Colonic mucosa (tissue), 4 donors: ENCODE measurements at regions of chr5 and their contacts with region 1.

Region 1: DNA sequence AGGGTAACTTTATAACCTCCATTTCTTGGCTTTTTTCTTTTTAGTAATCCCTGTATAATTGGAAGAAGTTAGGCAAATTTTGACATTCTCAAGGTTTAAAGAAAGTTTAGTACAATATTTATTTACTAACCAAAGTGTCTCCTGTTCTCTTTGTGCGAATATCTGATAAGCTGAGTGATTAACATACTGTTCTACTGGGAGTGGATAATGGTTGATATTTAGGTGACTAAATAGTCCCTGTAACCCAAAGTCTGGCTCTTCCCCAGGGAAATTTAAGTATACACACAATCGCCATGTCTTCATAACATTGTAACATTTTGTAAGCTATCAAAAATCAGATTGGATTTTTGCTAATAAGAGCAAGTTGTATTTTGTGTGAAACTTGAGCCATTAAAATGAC is 40.0 kb downstream of the CCNH start:
- DNase-seq: no peak
- H3K4me3 ChIP-seq: no peak overlapping the region
- H3K27ac ChIP-seq: no peak overlapping the region
- H3K4me1 ChIP-seq: no peaks in the 10 kb centered on the region
- H3K27me3 ChIP-seq: no peaks in the 10 kb centered on the region
- CTCF ChIP-seq: no peak

Region 2: GRCh38 chr5:86880785-86881492 is 491.8 kb before region 1 on chr5:
- intact Hi-C with region 1: loop called (anchors 10 kb)
- DNase-seq: peak; percentile 30
- H3K4me3 ChIP-seq: no peak overlapping the region
- H3K27ac ChIP-seq: no peak overlapping the region
- H3K4me1 ChIP-seq: no peaks in the 10 kb centered on the region
- H3K27me3 ChIP-seq: no peaks in the 10 kb centered on the region
- CTCF ChIP-seq: peak; percentile 43

Region 3: GRCh38 chr5:87605663-87606062 is 233.0 kb after region 1 on chr5:
- intact Hi-C with region 1: no loop called
- DNase-seq: no peak
- H3K4me3 ChIP-seq: no peak overlapping the region
- H3K27ac ChIP-seq: no peak overlapping the region
- H3K4me1 ChIP-seq: no peaks in the 10 kb centered on the region
- H3K27me3 ChIP-seq: no peaks in the 10 kb centered on the region
- CTCF ChIP-seq: no peak